ENCODE measurements at regions of chr11 and their contacts with region 1.

Region 1: DNA sequence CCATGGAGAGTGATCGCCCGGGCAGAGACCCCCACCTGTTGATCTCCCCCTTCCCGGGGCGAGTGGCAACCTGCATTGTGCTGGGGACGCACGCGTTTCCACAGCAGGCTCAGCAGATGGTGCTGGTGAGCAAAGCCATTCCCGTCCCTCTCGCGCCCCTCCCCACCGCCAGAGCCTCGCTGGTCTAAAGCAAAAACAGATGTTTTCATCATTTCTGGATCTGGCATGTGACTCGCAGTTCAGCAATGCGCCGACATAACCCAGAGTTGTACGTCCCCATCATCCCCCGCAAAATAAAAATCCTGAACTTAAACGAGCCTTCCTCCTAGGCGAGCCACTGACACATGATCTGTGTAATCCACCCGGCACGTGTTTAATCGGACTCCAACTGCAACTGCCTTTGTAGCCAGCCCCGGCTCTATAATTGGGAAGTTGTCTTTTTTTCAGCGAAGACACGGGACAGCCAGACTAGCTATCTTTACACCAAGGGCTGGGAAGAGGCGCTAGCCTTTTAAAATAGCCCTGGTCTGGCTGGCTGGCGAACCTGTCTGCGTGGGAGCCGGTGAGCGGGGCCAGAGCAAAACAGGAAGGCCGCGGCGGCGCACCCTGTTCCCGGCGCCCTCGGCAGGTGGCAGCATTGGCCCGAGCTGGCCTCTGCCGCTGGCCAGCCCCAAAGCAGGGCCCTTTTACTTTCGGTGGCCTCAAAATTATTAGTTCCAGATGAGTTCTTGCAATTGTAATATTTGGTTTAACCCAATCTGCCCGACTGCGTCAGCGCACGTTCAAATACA is 203.0 kb upstream of the SORL1-AS1 start:
- DNase-seq: peak; percentile 95

Region 2: DNA sequence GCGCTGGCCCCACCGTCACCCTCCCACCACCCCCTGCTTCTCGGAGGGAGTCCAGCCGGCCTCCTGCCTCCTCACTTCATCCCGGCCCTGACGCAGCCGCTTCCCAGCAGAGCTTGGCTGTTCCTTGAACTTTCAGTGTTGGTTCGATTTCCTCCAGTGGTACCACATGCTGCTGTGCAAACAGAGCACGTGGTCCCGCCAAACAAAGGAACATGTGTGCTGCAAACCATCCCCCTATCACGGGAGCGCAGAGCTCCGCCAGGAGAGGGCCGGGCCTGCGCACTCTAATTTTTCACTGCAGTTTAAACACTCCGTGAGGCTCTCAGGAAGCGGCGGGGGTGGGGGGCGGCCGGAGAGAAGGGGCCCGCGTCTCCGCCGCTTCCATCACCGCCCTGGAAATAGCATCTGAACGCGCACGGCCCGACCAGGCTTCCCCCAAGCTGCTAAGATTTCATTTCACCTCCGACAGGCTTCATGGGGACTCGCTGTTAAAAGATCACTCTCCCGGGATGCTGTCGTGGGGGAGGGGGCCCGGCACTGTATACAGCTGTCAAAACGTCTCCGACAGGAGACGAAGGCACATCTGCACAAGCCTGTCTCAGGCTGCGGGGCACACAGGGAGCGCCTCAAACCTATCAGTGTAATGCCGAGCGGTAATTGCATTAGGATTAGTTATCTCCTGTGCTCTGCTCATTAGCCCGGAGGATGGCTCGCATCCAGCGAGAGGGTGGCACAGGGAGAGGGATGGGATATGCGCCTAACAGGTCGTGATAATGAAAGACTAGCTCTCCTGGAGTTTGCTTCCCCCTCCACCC is 66.9 kb after region 1 on chr11:
- intact Hi-C with region 1: loop called (anchors 5 kb)
- DNase-seq: peak; percentile 91

Region 3: DNA sequence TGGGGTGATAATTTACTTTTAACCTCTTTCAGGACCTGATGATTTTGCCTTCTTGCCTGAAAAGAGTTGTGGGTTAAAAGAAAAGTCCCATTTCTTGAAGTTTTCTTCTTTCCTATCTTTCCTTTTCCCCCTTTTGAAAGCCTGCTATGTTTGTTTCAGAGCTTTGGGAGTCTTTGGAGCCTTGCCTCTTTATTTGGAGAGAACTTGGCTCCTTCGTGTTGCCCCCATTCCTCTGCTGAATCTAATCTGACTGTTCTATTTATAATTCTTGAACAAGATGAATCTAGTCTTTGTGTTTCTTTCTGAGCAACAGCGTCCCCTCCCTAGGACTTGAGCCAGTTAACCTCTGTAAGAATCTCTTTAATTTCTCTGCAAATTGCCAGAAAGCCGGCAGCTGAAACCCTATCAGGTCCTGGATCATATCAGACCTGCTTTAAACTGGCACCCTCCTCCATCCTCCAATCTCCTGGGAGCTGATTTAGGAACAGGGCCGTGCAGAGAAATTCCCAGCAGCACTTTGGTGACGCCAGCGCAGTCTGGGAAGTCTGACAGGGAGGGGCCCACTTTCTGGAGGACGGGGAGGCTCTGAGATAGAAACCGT is 86.1 kb after region 1 on chr11:
- intact Hi-C with region 1: loop called (anchors 2 kb)
- DNase-seq: peak; percentile 85

Region 4: DNA sequence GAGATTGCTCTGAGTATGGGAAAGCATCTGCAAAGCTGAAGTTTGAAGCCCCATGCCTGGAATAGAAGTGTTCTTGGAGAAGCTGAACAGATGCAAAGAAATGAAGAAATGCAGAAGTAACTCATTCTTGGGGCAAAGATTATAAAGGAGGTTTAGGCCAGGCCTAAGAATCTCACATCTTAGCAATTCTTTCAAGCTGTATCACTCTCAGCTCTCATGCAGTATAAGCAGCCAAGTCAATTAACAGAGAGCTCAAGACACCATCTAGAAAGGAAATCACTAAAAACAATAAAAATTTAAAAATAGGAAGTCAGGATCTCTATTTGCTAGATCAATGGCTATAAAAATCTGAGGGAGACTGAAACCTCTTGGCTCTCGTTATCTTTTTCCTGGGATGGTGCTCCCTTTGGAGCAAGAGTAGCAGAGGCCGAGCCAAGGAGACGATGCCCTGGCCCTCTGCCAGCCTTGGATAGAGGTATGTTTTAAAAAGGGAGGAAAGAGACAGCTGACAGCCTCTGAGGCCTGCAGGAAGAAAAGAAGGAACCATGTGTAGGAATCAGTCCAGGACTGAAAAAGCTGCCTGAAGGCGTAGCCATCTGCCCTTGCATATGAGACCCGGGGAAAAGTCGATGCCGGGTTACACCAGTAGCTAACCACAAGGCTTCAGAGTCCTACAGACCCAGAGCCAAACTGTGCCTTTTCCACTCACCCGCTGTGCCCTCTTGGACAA is 230.4 kb after region 1 on chr11:
- intact Hi-C with region 1: no loop called
- DNase-seq: no peak

Region 5: GRCh38 chr11:122020902-122021301 is 365.2 kb after region 1 on chr11:
- intact Hi-C with region 1: loop called (anchors 5 kb)
- DNase-seq: no peak

Region 6: GRCh38 chr11:122101625-122102291 is 446.0 kb after region 1 on chr11:
- intact Hi-C with region 1: loop called (anchors 1 kb)
- DNase-seq: no peak

Region 7: GRCh38 chr11:122202951-122203456 is 547.3 kb after region 1 on chr11:
- intact Hi-C with region 1: loop called (anchors 1 kb)
- DNase-seq: no peak

Region 8: GRCh38 chr11:122505304-122506006 is 849.7 kb after region 1 on chr11:
- intact Hi-C with region 1: loop called (anchors 5 kb)
- DNase-seq: peak; percentile 80

Measured in cardiac septum (tissue), 1 donor.